Esophagus muscularis mucosa (tissue), 4 donors: ENCODE measurements at regions of chr14 and their contacts with region 1.

Region 1: DNA sequence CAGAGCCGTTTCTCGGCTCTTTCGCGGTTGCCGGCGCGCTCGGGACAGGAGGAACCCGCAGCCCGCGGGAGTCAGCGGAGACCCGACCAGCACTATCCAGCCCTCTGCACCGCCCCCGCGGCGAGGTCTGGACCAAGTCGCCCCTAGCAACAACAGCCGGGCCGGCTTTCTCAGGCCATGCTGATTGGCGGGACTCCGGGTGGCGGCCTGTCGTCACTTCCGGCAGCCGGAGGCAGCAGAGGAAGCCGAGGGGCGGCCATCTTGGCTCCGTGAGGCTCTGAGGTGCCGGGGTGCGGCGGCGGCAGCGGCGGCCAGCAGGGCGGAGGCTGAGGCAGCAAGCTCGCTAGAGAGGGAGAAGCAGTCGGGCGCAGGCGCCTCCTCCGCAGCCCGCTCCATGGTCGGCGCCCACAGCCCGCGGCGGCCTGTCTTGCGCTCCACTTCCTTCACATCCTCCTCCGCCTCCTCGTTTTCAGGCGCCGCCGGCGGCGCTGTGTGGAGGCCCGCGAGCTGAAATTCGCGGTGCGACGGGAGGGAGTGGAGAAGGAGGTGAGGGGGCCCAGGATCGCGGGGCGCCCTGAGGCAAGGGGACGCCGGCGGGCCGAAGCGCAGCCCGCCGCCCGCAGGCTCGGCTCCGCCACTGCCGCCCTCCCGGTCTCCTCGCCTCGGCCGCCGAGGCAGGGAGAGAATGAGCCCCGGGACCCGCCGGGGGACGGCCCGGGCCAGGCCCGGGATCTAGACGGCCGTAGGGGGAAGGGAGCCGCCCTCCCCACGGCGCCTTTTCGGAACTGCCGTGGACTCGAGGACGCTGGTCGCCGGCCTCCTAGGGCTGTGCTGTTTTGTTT is at the start of gene MARK3:
- DNase-seq: peak; percentile 99
- H3K4me3 ChIP-seq: peak within 1 kb of the TSS; percentile 90 to 99 (median 94)
- H3K27ac ChIP-seq: peak within 1 kb of the TSS; percentile 98 to 100 (median 100)
- H3K4me1 ChIP-seq: peaks cover 24 to 45% (median 43%) of the 10 kb centered on the region in 4 donors
- H3K27me3 ChIP-seq: peaks cover 0 to 5% (median 0%) of the 10 kb centered on the region in 4 donors
- CTCF ChIP-seq: peak in 2 of 3 experiments; percentile 21 to 47
- EP300 ChIP-seq: no peak
- POLR2A ChIP-seq: peak; percentile 73
- total RNA-seq, gene MARK3: 57.4 to 78.1 (median 68.1) TPM

Region 2: DNA sequence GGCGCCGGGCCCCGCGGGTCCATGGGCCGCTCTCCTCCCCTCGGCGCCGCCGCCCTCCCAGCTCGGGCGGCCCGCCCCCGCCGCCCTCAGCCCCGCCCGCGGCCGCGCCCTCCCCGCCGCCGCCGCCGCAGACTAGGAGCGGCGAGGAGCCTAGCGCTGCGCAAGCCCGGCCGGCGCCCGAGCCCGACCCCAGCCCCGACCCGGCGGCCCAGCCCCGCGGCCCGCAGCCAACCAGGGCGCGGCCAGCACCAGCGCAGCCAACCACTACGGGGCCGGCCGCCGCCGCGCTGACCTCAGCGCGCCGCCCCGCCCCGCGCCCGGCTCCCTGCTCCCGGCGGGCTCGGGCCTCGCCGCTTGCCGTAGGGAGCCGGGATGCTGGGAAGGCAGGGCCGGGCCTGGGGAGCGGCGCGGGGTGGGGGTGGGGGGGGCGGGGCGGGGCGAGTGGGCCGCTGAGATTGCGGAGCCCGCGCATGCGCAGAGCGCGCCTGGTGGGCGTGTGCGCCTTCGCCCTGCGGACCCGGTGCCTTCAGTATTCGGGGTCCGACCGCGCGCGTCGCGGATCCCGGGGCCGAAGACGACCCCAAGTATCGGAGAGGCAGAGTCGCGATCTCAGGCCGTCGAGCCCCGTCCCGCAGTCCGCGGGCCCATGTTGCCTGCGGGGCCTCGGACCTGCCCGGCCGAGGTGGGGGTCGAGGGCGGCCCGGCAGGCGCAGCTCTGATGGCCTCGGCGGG is 327.8 kb before region 1 on chr14 and contains the start of gene CDC42BPB:
- intact Hi-C with region 1: loop called (anchors 5 kb)
- DNase-seq: peak; percentile 94
- H3K4me3 ChIP-seq: peak within 1 kb of the TSS; percentile 88 to 99 (median 98)
- H3K27ac ChIP-seq: peak within 1 kb of the TSS; percentile 89 to 98 (median 96)
- H3K4me1 ChIP-seq: peaks cover 34 to 66% (median 57%) of the 10 kb centered on the region in 4 donors
- H3K27me3 ChIP-seq: no peaks in the 10 kb centered on the region
- CTCF ChIP-seq: no peak
- EP300 ChIP-seq: no peak
- POLR2A ChIP-seq: no peak
- total RNA-seq, gene CDC42BPB: 93.9 to 132 (median 110) TPM

Region 3: GRCh38 chr14:103334644-103335622 is 50.4 kb before region 1 on chr14:
- intact Hi-C with region 1: loop called (anchors 5 kb)
- DNase-seq: peak; percentile 93
- H3K4me3 ChIP-seq: peak overlapping the region; percentile 72 to 100 (median 94)
- H3K27ac ChIP-seq: peak overlapping the region; percentile 96 to 100 (median 100)
- H3K4me1 ChIP-seq: peaks cover 31 to 44% (median 41%) of the 10 kb centered on the region in 4 donors
- H3K27me3 ChIP-seq: no peaks in the 10 kb centered on the region
- CTCF ChIP-seq: no peak
- EP300 ChIP-seq: no peak
- POLR2A ChIP-seq: no peak

Region 4: GRCh38 chr14:103418481-103418818 is 33.1 kb after region 1 on chr14:
- intact Hi-C with region 1: no loop called
- DNase-seq: no peak
- H3K4me3 ChIP-seq: no peak overlapping the region
- H3K27ac ChIP-seq: no peak overlapping the region
- H3K4me1 ChIP-seq: peaks cover 28 to 35% (median 29%) of the 10 kb centered on the region in 4 donors
- H3K27me3 ChIP-seq: no peaks in the 10 kb centered on the region
- CTCF ChIP-seq: no peak
- EP300 ChIP-seq: no peak
- POLR2A ChIP-seq: no peak

Region 5: DNA sequence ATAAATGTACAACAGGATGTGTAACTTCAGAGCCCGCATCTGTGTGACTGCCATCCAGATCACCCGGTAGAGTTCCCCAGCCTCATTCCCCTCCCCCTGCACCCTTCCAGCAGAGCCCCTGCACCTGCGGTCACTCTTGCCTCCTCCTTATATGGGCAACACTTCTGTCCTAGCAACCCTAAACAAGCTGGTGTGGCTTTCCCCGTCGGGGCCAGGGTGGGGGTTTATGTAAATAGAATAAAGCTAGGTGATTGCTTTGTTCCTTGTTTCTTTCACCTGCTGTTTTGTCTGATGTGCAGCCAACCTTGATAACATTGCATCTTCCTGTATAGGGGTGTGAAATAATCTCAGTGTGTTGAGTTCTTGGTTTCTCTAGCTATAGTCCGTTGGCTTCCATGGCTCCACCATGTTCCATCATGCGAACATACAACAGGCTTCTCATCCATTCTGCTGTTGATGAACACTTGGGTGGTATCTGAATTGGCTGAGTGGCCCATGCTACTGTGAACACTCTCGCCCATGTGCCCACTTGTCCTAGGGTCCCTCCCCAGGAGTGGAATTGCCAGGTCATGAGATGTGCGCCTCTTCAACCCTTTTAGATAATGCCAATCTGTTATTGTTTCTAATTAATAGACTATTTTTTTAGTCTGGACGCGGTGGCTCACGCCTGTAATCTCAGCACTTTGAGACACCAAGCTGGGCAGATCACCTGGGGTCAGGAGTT is 855.2 kb after region 1 on chr14:
- intact Hi-C with region 1: no loop called
- DNase-seq: no peak
- H3K4me3 ChIP-seq: no peak overlapping the region
- H3K27ac ChIP-seq: no peak overlapping the region
- H3K4me1 ChIP-seq: no peaks in the 10 kb centered on the region
- H3K27me3 ChIP-seq: peaks cover 0 to 19% (median 0%) of the 10 kb centered on the region in 4 donors
- CTCF ChIP-seq: no peak
- EP300 ChIP-seq: no peak
- POLR2A ChIP-seq: no peak